ENCODE measurements at regions of chr4 and their contacts with region 1.

Region 1: DNA sequence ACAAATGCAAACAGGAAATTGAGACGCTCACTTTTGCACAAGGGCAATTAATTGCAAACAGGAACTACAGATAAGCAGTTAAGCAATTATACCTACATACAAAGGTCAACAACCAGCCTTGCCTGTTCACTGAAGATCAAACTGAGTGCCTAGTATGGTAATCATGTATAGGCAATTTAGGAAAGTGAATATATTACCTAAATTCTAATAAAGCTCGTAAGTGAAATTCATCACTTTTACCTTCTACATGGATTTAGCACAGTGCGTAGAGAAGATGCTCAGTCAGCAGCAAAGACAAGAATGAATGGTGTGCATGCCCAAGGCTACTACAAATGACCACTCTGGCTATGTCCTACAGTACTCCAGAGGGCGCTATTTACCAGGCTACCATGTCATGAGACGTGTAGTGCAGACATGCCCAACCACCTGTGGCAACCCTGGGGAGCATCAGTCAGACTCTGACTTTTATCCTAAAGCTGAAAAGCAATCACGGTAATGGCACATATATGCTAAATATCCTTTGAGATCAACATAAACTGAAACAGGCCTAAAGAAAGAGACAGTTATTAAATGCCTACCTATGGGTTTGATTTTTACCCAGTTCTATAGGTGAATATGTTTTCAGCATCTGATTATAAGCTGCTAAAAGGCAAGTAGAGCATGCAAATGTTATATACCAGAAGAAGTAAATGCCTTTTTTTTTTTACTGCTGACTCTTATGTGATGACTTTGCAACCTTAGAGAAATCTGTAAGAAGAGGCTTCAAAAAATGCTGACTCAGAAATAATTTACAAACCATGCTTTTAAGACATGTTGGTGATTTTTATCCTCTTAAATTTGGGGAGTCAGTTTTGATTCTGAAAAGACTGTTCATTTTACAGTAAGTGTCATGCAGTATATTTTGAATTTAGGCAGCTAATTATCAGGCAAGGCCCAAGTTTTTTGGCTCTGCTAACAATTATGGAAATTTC is 178.0 kb downstream of the PPP3CA start:
- DNase-seq: no peak
- H3K4me3 ChIP-seq: no peak overlapping the region
- H3K27me3 ChIP-seq: no peaks in the 10 kb centered on the region
- CTCF ChIP-seq: peak; percentile 61

Region 2: DNA sequence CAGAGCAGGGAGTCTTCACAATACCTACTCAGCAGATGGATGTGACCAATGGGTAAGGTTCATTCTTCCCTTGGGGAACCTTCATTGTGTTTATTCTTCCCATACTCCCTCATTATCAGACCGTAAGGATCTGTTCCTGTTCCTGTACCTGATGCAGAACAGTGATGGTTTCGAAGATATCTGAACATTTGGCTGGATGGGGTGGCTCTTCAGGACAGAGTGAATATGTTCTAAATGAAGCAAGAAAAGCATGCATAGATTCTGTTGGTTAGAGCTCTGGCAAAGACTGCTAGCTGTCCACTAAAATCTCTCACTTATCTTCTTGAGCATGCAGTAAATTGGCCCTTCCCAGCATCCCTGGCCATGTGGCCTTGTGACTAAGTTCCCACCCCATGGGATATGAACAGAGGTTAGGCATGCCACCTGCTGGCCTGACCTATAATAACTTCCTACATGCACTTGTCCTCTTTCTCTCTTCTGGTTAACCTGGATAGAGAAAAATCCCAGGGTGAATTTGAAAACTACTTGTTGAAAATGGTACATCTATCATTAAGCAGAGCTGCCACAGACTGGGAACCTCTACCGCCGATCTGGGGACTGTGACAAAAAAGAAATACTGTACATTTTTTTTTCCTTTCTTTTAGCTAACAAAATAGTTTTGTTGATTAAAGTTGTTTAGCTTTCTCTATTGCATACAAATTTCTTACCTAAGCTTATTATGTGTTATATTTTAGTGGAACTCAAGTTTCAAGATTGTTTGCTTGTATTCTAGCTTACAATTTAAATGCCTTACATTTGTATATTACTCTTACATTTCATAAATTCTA is 561.2 kb after region 1 on chr4:
- CTCF ChIA-PET with region 1: interaction called, 19 read pairs
- POLR2A ChIA-PET with region 1: interaction called, 3 read pairs
- DNase-seq: peak; percentile 5
- H3K4me3 ChIP-seq: no peak overlapping the region
- H3K27me3 ChIP-seq: no peaks in the 10 kb centered on the region
- CTCF ChIP-seq: peak; percentile 70